ENCODE measurements at regions of chr19 and their contacts with region 1.

Region 1: GRCh38 chr19:2475702-2476450 is at the start of gene GADD45B:
- DNase-seq: peak; percentile 93 to 98 (median 96)
- H3K4me3 ChIP-seq: peak within 1 kb of the TSS; percentile 92
- H3K4me3 Mint-ChIP-seq: peak within 1 kb of the TSS; percentile 98 to 100 (median 100)
- H3K27ac ChIP-seq: peak within 1 kb of the TSS; percentile 83
- H3K27ac Mint-ChIP-seq: peak within 1 kb of the TSS; percentile 91 to 99 (median 96)
- H3K4me1 ChIP-seq: peaks cover 15% of the 10 kb centered on the region
- H3K4me1 Mint-ChIP-seq: peaks cover 8 to 22% (median 17%) of the 10 kb centered on the region in 3 donors
- H3K27me3 ChIP-seq: no peaks in the 10 kb centered on the region
- H3K27me3 Mint-ChIP-seq: peaks cover 0 to 16% of the 10 kb centered on the region in 2 donors
- total RNA-seq, gene GADD45B: 51.1 to 53.7 TPM

Region 2: DNA sequence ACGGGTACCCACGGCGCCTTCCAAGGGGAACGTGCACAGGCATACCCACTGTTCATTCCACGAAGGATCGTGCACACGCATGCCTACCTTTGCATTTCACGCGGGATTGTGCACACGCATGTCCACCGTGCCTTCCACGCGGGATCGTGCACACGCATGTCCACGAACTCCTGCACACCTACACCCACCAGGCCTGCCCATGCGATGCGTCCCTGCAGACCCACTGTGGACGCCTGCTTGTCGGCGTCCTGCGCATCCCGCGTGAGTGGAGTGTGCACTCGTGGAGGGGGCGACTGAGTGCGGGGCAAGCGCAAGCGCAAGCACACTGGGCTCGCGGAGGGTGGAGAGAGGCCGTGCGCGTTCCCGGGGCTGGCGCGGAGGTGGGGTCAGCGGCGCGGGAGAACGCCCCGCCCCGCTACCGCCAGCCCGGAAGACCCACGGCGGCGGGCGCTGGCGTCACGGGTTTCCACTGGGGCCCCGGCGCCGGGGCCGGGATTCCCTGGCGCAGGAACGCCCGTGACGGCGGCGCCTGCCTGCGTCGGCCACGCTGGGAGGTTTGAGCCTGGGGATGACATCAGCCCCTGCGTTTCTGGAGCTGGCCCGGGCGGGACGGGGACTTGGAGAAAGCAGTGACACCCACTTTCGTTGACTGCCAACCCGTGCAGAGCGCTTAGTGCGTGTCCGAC is 18.7 kb after region 1 on chr19:
- CTCF ChIA-PET with region 1: interaction called, 6 read pairs
- POLR2A ChIA-PET with region 1: interaction called, 47 read pairs
- DNase-seq: peak; percentile 45 to 71 (median 61)
- H3K4me3 ChIP-seq: peak overlapping the region; percentile 77
- H3K4me3 Mint-ChIP-seq: peak overlapping the region; percentile 74 to 87 (median 80)
- H3K27ac ChIP-seq: peak overlapping the region; percentile 43
- H3K27ac Mint-ChIP-seq: peak overlapping the region in 6 of 8 donors; percentile 10 to 66 (median 60)
- H3K4me1 ChIP-seq: peaks cover 23% of the 10 kb centered on the region
- H3K4me1 Mint-ChIP-seq: peaks cover 14 to 41% (median 15%) of the 10 kb centered on the region in 3 donors
- H3K27me3 ChIP-seq: peaks cover 12% of the 10 kb centered on the region
- H3K27me3 Mint-ChIP-seq: peaks cover 23% of the 10 kb centered on the region in 2 donors

Region 3: GRCh38 chr19:2543463-2544442 is 67.9 kb after region 1 on chr19:
- CTCF ChIA-PET with region 1: interaction called, 9 read pairs
- POLR2A ChIA-PET with region 1: interaction called, 14 read pairs
- DNase-seq: peak; percentile 15 to 70 (median 35)
- H3K4me3 ChIP-seq: peak overlapping the region; percentile 49
- H3K4me3 Mint-ChIP-seq: peak overlapping the region; percentile 36 to 75 (median 68)
- H3K27ac ChIP-seq: peak overlapping the region; percentile 48
- H3K27ac Mint-ChIP-seq: peak overlapping the region in 5 of 8 donors; percentile 23 to 75 (median 34)
- H3K4me1 ChIP-seq: peaks cover 10% of the 10 kb centered on the region
- H3K4me1 Mint-ChIP-seq: peaks cover 10 to 18% (median 14%) of the 10 kb centered on the region in 3 donors
- H3K27me3 ChIP-seq: no peaks in the 10 kb centered on the region
- H3K27me3 Mint-ChIP-seq: peaks cover 0 to 3% of the 10 kb centered on the region in 2 donors

Region 4: DNA sequence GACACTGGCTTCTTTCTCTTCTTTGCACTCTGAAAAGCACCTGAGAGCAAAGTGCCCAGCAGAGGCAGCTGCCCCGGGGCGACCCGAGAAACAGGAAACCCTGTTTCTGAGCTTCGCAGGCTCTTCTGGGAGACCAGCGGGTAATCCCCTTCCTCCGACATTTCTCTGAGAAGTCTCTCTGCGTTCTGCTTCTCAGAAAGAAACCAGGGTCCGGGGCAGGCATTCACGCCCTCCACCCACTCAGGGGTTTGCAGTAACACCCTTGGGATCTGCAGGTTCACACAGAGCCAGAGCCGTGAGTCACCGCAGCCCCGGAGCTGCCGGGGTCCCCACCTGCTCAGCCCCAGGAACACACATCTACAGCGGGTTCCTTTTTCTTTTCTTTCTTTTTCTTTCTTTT is 86.0 kb after region 1 on chr19:
- CTCF ChIA-PET with region 1: interaction called, 24 read pairs
- POLR2A ChIA-PET with region 1: interaction called, 33 read pairs
- DNase-seq: peak; percentile 42 to 79 (median 64)
- H3K4me3 ChIP-seq: peak overlapping the region; percentile 86
- H3K4me3 Mint-ChIP-seq: peak overlapping the region; percentile 90 to 96 (median 93)
- H3K27ac ChIP-seq: no peak overlapping the region
- H3K27ac Mint-ChIP-seq: peak overlapping the region; percentile 84 to 99 (median 94)
- H3K4me1 ChIP-seq: peaks cover 15% of the 10 kb centered on the region
- H3K4me1 Mint-ChIP-seq: peaks cover 11 to 21% (median 13%) of the 10 kb centered on the region in 3 donors
- H3K27me3 ChIP-seq: no peaks in the 10 kb centered on the region
- H3K27me3 Mint-ChIP-seq: no peaks in the 10 kb centered on the region

Region 5: DNA sequence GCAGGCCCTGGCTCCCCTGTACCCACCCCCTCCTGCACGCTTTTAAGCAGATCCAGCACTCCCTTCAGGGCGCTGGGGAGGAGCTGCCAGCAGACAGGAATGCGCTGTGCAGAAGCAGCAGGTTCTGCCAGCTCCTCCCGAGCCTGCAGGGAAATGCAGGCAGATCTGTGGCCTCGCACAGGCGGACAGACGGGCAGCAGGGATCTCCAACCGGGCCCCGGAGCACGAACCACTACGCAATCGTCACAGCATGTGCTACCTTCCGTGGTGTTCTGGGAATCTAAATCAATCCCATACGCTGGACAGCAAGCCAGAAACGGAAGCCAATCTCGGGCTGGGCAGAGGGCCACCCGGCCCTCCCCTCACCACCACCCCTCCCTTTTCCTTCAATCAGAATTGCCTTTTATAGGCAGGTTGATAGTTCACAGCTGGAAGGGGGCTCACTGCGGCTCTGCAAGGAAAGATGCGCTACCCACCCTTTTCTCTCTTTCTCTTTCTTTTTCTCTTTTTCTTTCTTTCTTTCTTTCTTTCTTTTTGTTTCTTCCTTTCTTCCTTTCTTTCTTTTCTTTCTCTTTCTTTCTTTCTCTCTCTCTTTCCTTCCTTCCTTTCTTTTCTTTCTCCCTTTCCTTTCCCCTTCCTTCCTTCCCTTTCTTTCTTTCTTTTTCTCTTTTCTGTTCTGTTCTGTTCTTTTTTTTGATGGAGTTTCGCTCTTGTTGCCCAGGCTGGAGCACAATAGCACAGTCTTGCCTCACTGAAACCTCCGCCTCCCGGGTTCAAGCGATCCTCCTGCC is 126.7 kb after region 1 on chr19:
- CTCF ChIA-PET with region 1: interaction called, 111 read pairs
- POLR2A ChIA-PET with region 1: interaction called, 101 read pairs
- DNase-seq: no peak
- H3K4me3 ChIP-seq: no peak overlapping the region
- H3K4me3 Mint-ChIP-seq: no peak overlapping the region
- H3K27ac ChIP-seq: no peak overlapping the region
- H3K27ac Mint-ChIP-seq: peak overlapping the region in 2 of 8 donors; percentile 43 to 52
- H3K4me1 ChIP-seq: peaks cover 11% of the 10 kb centered on the region
- H3K4me1 Mint-ChIP-seq: peaks cover 10 to 13% (median 13%) of the 10 kb centered on the region in 3 donors
- H3K27me3 ChIP-seq: no peaks in the 10 kb centered on the region
- H3K27me3 Mint-ChIP-seq: no peaks in the 10 kb centered on the region

Region 6: DNA sequence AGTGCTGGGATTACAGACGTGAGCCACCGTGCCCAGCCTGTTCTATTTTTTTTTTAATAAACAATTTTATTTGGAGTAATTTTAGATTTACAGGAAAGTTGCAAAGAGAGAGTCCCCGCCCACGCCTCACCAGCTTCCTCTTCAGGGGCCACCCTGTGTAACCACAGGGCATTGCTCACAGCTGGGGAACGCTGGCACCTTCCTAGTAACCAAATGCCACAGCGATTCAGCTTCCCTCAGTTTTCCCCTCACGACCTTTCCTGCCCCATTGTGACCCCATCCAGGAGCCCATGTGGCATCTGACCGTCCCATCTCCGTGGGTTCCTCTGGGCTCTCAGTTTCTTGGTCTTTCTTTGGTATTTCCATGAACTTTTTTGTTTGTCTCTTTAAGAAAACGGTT is 142.7 kb after region 1 on chr19:
- CTCF ChIA-PET with region 1: interaction called, 111 read pairs
- POLR2A ChIA-PET with region 1: interaction called, 86 read pairs
- DNase-seq: peak; percentile 42 to 74 (median 49)
- H3K4me3 ChIP-seq: peak overlapping the region; percentile 61
- H3K4me3 Mint-ChIP-seq: peak overlapping the region; percentile 48 to 83 (median 70)
- H3K27ac ChIP-seq: no peak overlapping the region
- H3K27ac Mint-ChIP-seq: peak overlapping the region; percentile 78 to 97 (median 92)
- H3K4me1 ChIP-seq: peaks cover 68% of the 10 kb centered on the region
- H3K4me1 Mint-ChIP-seq: peaks cover 56 to 71% (median 68%) of the 10 kb centered on the region in 3 donors
- H3K27me3 ChIP-seq: no peaks in the 10 kb centered on the region
- H3K27me3 Mint-ChIP-seq: peaks cover 0 to 3% of the 10 kb centered on the region in 2 donors

Region 7: GRCh38 chr19:2636897-2637683 is 161.2 kb after region 1 on chr19:
- CTCF ChIA-PET with region 1: interaction called, 14 read pairs
- POLR2A ChIA-PET with region 1: interaction called, 17 read pairs
- DNase-seq: peak; percentile 68 to 84 (median 70)
- H3K4me3 ChIP-seq: no peak overlapping the region
- H3K4me3 Mint-ChIP-seq: peak overlapping the region in 1 of 7 donors; percentile 44
- H3K27ac ChIP-seq: no peak overlapping the region
- H3K27ac Mint-ChIP-seq: peak overlapping the region in 2 of 8 donors; percentile 23 to 85
- H3K4me1 ChIP-seq: peaks cover 10% of the 10 kb centered on the region
- H3K4me1 Mint-ChIP-seq: peaks cover 0 to 12% (median 4%) of the 10 kb centered on the region in 3 donors
- H3K27me3 ChIP-seq: no peaks in the 10 kb centered on the region
- H3K27me3 Mint-ChIP-seq: peaks cover 0 to 4% of the 10 kb centered on the region in 2 donors

Measured in CD8-positive, alpha-beta memory T cell (primary cell).